HCT116 (cell line): ENCODE measurements at regions of chr1 and their contacts with region 1.

Region 1: GRCh38 chr1:53860967-53861411 is 22.9 kb upstream of the NDC1 start:
- DNase-seq: peak; percentile 32
- ATAC-seq: peak; percentile 97
- H3K4me3 ChIP-seq: no peak overlapping the region
- H3K27ac ChIP-seq: no peak overlapping the region
- H3K4me1 ChIP-seq: no peaks in the 10 kb centered on the region
- H3K27me3 ChIP-seq: no peaks in the 10 kb centered on the region
- CTCF ChIP-seq: peak; percentile 75 to 91 (median 84)
- POLR2A ChIP-seq: no peak
- RAD21 ChIP-seq: peak; percentile 93

Region 2: GRCh38 chr1:53871221-53871620 is 10.2 kb after region 1 on chr1:
- CTCF ChIA-PET with region 1: interaction called, 12 read pairs
- POLR2A ChIA-PET with region 1: interaction called, 3 read pairs
- RAD21 ChIA-PET with region 1: no interaction called
- intact Hi-C with region 1: no loop called
- DNase-seq: no peak
- ATAC-seq: no peak
- H3K4me3 ChIP-seq: no peak overlapping the region
- H3K27ac ChIP-seq: no peak overlapping the region
- H3K4me1 ChIP-seq: no peaks in the 10 kb centered on the region
- H3K27me3 ChIP-seq: no peaks in the 10 kb centered on the region
- CTCF ChIP-seq: no peak
- POLR2A ChIP-seq: no peak
- RAD21 ChIP-seq: no peak

Region 3: DNA sequence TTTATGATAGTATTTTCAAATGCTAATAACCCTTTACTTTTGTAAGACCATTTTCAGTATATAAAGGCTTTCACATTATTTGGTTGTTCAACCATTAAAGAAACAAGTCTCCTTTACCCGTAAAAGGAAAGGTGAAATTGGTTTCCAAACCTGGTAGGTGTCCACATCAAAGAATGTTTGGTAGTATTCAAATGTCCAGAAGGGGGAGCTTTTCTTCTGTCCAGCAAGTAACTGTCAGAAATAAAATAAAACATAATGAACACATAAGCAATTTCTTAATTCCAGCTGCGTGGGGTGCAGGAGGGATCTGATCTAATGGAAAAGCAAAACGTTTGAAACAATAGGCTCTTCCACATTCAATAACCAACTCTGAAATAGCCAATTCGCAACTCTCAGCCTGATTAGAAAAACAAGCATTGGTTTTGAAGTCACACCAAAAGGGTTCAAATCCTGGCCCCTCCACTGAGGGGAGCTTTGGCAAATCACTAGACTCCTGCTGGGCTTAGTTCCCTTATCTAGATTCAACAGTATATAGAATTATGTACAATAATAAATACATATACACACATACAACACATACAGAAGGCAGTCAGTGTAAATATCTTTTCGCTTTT is 17.6 kb after region 1 on chr1:
- CTCF ChIA-PET with region 1: interaction called, 15 read pairs
- POLR2A ChIA-PET with region 1: no interaction called
- RAD21 ChIA-PET with region 1: no interaction called
- intact Hi-C with region 1: no loop called
- DNase-seq: peak; percentile 49
- ATAC-seq: peak; percentile 67
- H3K4me3 ChIP-seq: no peak overlapping the region
- H3K27ac ChIP-seq: no peak overlapping the region
- H3K4me1 ChIP-seq: peaks cover 0 to 1% of the 10 kb centered on the region in 2 experiments; a peak in 1 of 4 replicates
- H3K27me3 ChIP-seq: no peaks in the 10 kb centered on the region
- CTCF ChIP-seq: peak; percentile 61 to 75 (median 70); a peak in 5 of 6 replicates
- POLR2A ChIP-seq: no peak
- RAD21 ChIP-seq: peak; percentile 73

Region 4: GRCh38 chr1:53959664-53960250 is 98.8 kb after region 1 on chr1:
- CTCF ChIA-PET with region 1: interaction called, 63 read pairs
- POLR2A ChIA-PET with region 1: no interaction called
- RAD21 ChIA-PET with region 1: interaction called, 7 to 8 read pairs
- intact Hi-C with region 1: loop called (anchors 1 kb)
- DNase-seq: no peak
- ATAC-seq: 0 out of 2 replicates have a peak, but pooled peaks have one; percentile 31
- H3K4me3 ChIP-seq: no peak overlapping the region
- H3K27ac ChIP-seq: no peak overlapping the region
- H3K4me1 ChIP-seq: peaks cover 26 to 34% of the 10 kb centered on the region in 2 experiments
- H3K27me3 ChIP-seq: no peaks in the 10 kb centered on the region
- CTCF ChIP-seq: peak; percentile 57 to 81 (median 68)
- POLR2A ChIP-seq: no peak
- RAD21 ChIP-seq: peak; percentile 75

Region 5: GRCh38 chr1:53982034-53982762 is 121.2 kb after region 1 on chr1:
- CTCF ChIA-PET with region 1: no interaction called
- POLR2A ChIA-PET with region 1: no interaction called
- RAD21 ChIA-PET with region 1: no interaction called
- intact Hi-C with region 1: no loop called
- DNase-seq: no peak
- ATAC-seq: peak; percentile 78
- H3K4me3 ChIP-seq: no peak overlapping the region
- H3K27ac ChIP-seq: no peak overlapping the region
- H3K4me1 ChIP-seq: peaks cover 7% of the 10 kb centered on the region in 2 experiments; a peak in 3 of 4 replicates
- H3K27me3 ChIP-seq: no peaks in the 10 kb centered on the region
- CTCF ChIP-seq: no peak
- POLR2A ChIP-seq: no peak
- RAD21 ChIP-seq: no peak

Region 6: GRCh38 chr1:54052934-54053744 is 192.2 kb after region 1 on chr1 and contains the starts of genes TCEANC2 and TMEM59:
- CTCF ChIA-PET with region 1: interaction called, 3 read pairs
- POLR2A ChIA-PET with region 1: no interaction called
- RAD21 ChIA-PET with region 1: no interaction called
- intact Hi-C with region 1: loop called (anchors 1 kb)
- DNase-seq: peak; percentile 97
- ATAC-seq: peak; percentile 96
- H3K4me3 ChIP-seq: peak within 1 kb of the TSS; percentile 88 to 94
- H3K27ac ChIP-seq: peak within 1 kb of the TSS; percentile 70
- H3K4me1 ChIP-seq: peaks cover 8 to 18% of the 10 kb centered on the region in 2 experiments; a peak in 3 of 4 replicates
- H3K27me3 ChIP-seq: no peaks in the 10 kb centered on the region
- CTCF ChIP-seq: no peak
- POLR2A ChIP-seq: no peak
- RAD21 ChIP-seq: no peak
- total RNA-seq, gene TCEANC2: 5.4 TPM
- total RNA-seq, gene TMEM59: 121 TPM

Region 7: GRCh38 chr1:54081306-54082270 is 220.6 kb after region 1 on chr1:
- CTCF ChIA-PET with region 1: interaction called, 15 read pairs
- POLR2A ChIA-PET with region 1: no interaction called
- RAD21 ChIA-PET with region 1: no interaction called
- intact Hi-C with region 1: no loop called
- DNase-seq: peak; percentile 63
- ATAC-seq: peak; percentile 100
- H3K4me3 ChIP-seq: no peak overlapping the region
- H3K27ac ChIP-seq: no peak overlapping the region
- H3K4me1 ChIP-seq: peaks cover 0 to 7% of the 10 kb centered on the region in 2 experiments; a peak in 2 of 4 replicates
- H3K27me3 ChIP-seq: no peaks in the 10 kb centered on the region
- CTCF ChIP-seq: peak; percentile 77 to 97 (median 96)
- POLR2A ChIP-seq: no peak
- RAD21 ChIP-seq: peak; percentile 75

Region 8: GRCh38 chr1:54406339-54407153 is 545.6 kb after region 1 on chr1 and contains the start of gene SSBP3:
- CTCF ChIA-PET with region 1: no interaction called
- POLR2A ChIA-PET with region 1: no interaction called
- RAD21 ChIA-PET with region 1: no interaction called
- intact Hi-C with region 1: loop called (anchors 5 kb)
- DNase-seq: peak; percentile 75
- ATAC-seq: peak; percentile 92
- H3K4me3 ChIP-seq: peak within 1 kb of the TSS; percentile 63 to 70
- H3K27ac ChIP-seq: peak within 1 kb of the TSS; percentile 87
- H3K4me1 ChIP-seq: peaks cover 30 to 41% of the 10 kb centered on the region in 2 experiments
- H3K27me3 ChIP-seq: no peaks in the 10 kb centered on the region
- CTCF ChIP-seq: no peak
- POLR2A ChIP-seq: peak; percentile 31
- RAD21 ChIP-seq: no peak
- total RNA-seq, gene SSBP3: 37.5 TPM